Panc1 (cell line): ENCODE measurements at regions of chr10 and their contacts with region 1.

Region 1: DNA sequence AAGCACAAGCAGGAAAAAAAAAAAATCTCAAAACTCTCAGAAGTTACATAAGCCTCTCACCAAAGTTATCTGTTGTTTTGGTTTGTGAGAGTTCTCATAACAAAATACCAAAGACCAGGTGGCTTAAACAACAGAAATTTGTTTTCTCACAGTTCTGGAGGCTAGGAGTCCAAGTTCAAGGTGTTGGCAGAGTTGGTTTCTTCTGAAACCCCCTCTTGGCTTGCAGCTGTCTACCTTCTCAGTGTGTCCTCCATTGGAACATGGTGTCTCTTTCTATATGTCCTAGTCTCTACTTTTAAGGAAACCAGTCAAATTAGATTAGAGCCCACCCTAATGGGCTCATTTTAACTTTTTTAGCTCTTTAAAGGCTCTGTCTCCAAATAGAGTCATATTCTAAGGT is 44.9 kb downstream of the TNKS2 start:
- DNase-seq: no peak
- ATAC-seq: no peak
- H3K4me3 ChIP-seq: no peak overlapping the region
- H3K27ac ChIP-seq: no peak overlapping the region
- H3K4me1 ChIP-seq: no peaks in the 10 kb centered on the region
- H3K27me3 ChIP-seq: no peaks in the 10 kb centered on the region
- CTCF ChIP-seq: no peak

Region 2: GRCh38 chr10:91758303-91759146 is 84.6 kb before region 1 on chr10:
- CTCF ChIA-PET with region 1: no interaction called
- POLR2A ChIA-PET with region 1: no interaction called
- in situ Hi-C with region 1: no loop called
- intact Hi-C with region 1: loop called (anchors 10 kb)
- DNase-seq: peak; percentile 39
- ATAC-seq: peak; percentile 94
- H3K4me3 ChIP-seq: no peak overlapping the region
- H3K27ac ChIP-seq: no peak overlapping the region
- H3K4me1 ChIP-seq: no peaks in the 10 kb centered on the region
- H3K27me3 ChIP-seq: peaks cover 16% of the 10 kb centered on the region
- CTCF ChIP-seq: peak; percentile 71; the same call in 1 of the 2 replicates

Region 3: DNA sequence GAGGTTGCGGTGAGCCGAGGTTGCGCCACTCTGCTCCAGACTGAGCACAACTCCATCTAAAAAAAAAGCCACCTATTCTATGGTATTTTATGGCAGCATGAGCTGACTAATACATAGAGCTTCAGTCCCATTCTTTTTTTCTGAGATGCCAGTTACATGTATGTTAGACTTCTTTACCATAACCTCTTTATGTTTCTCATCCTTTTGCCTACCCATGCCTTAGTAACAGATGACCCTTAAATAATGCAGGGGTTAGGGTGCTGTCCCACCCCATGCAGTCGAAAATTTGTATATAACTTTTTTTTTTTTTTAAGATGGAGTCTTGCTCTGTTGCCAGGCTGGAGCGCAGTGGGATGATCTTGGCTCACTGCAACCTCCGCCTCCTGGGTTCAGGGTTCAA is 824.0 kb after region 1 on chr10:
- CTCF ChIA-PET with region 1: no interaction called
- POLR2A ChIA-PET with region 1: no interaction called
- in situ Hi-C with region 1: no loop called
- intact Hi-C with region 1: no loop called
- DNase-seq: no peak
- ATAC-seq: no peak
- H3K4me3 ChIP-seq: no peak overlapping the region
- H3K27ac ChIP-seq: no peak overlapping the region
- H3K4me1 ChIP-seq: no peaks in the 10 kb centered on the region
- H3K27me3 ChIP-seq: no peaks in the 10 kb centered on the region
- CTCF ChIP-seq: no peak